Sigmoid colon (tissue), 7 donors: ENCODE measurements at regions of chr22 and their contacts with region 1.

Region 1: DNA sequence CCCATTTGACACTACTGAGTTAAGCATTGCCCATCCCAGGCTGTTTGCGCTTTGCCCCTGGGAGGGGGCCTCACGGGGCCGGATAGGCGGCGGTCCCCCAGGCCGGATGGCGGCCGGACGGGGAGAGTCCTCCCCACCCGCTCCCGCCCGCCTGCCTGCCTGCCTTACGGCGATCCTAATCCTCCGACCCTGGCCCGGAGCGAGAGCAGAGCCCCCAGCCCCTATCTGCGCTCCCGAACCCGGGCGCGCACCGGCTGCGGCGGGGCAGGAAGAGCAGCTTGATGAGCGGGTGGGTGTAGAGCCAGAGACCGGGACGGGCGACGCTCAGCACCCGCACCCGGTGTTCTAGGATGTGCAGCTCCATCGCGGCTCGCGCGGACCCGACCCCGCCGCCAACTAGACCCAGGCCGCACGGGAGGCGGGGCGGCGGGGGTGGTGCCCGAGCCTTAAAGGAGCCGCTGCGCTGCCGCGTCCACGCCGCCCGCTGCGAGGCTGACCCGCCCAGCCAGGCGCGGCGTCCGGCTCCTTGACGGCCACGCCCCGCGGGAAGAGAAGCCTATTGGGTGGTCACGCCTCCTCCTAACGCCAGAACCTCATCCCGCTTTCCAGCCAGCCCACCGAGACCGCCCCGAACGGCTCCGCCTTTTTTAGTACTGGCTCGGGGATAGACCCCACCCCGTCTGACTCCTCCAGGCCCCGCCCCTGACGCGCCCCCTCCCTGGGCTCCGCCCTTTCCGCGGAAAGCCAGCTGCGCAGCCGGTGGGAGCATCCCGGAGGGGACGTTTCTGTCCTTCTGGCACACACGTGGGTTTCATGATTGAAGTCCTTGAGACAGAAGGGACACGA is at the start of gene CASTOR1:
- DNase-seq: peak; percentile 100
- H3K4me3 ChIP-seq: peak within 1 kb of the TSS; percentile 90 to 95 (median 93)
- H3K27ac ChIP-seq: peak within 1 kb of the TSS; percentile 95 to 98 (median 96)
- H3K4me1 ChIP-seq: peaks cover 0 to 42% (median 35%) of the 10 kb centered on the region in 4 donors
- H3K27me3 ChIP-seq: no peaks in the 10 kb centered on the region
- CTCF ChIP-seq: no peak
- EP300 ChIP-seq: no peak
- POLR2A ChIP-seq: peak; percentile 81 to 85
- total RNA-seq, gene CASTOR1: 5.3 to 15.0 (median 10.8) TPM

Region 2: GRCh38 chr22:30143265-30143664 is 146.1 kb before region 1 on chr22:
- intact Hi-C with region 1: no loop called
- DNase-seq: no peak
- H3K4me3 ChIP-seq: no peak overlapping the region
- H3K27ac ChIP-seq: no peak overlapping the region
- H3K4me1 ChIP-seq: no peaks in the 10 kb centered on the region
- H3K27me3 ChIP-seq: no peaks in the 10 kb centered on the region
- CTCF ChIP-seq: no peak
- EP300 ChIP-seq: no peak
- POLR2A ChIP-seq: no peak

Region 3: DNA sequence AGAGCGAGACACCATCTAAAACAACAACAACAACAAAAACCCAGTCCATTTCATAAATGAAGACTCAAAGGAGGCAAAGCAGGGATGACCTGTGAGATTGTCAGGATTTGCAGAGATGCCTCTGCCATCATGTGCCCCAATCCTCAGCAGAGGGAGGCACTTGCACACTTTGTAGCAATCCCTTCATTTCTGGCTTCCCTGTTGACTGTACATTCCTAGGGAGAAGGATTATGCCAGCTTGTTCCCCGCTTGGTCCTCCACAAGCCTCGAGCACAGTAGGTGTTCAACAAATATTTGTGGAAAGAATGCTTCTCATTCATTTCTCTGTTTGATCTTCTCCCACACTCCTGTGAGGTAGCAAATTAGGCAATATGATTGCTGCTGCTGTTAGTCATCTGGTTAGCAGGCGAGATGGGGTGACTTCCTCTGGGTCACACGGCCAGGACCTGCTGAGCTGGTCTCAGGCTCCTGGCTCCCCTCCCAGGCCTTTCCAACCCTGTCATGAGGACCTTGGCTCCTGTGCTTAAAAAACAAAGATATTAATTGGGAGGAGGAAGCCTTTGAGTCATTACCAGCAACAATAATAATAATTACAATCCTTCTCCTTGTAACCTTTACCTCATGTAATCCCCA is 76.9 kb before region 1 on chr22:
- intact Hi-C with region 1: no loop called
- DNase-seq: peak; percentile 82
- H3K4me3 ChIP-seq: no peak overlapping the region
- H3K27ac ChIP-seq: no peak overlapping the region
- H3K4me1 ChIP-seq: peaks cover 0 to 27% (median 11%) of the 10 kb centered on the region in 4 donors
- H3K27me3 ChIP-seq: no peaks in the 10 kb centered on the region
- CTCF ChIP-seq: no peak
- EP300 ChIP-seq: no peak
- POLR2A ChIP-seq: no peak

Region 4: DNA sequence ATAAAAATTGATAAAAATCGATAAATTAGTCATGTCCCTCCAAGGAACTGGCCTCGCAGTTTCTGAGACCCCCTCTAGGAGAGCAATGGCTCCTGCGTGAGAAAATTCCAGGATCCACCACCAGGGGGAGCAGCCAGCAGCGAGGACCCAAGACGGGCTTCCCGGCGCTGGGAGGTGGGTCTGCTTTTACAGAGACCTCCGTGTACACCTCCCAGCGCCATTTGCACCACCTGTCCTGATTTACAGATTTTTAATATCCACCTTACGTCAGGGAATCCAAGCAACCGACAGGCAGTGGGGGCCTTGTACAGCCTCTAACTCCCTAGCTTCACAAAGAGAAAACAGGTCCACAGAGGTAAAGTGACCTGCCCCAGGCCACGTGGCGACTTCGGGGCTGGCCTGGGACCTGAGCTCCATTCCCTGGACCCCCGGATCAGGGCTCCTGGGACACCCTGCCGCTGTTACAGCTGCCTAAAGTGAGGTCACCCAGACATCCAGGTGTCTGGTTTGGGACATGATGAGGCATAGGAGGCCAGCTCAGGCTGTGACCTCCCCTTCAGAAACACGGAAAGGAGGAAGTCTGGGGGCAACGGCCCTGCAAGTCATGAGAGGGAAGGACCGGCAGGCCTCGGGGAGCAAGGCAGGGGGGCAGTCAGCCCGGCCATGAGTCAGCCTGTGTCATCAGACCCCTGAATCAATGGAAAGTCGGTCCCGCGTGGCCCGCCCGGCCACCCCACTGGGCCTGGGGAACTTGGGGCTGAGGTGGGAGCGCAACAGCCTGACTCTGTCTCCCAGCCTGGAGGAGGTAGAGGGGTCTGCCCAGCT is 26.2 kb before region 1 on chr22:
- intact Hi-C with region 1: loop called (anchors 2 kb)
- DNase-seq: peak; percentile 87
- H3K4me3 ChIP-seq: peak overlapping the region in 2 of 4 donors; percentile 19 to 32
- H3K27ac ChIP-seq: no peak overlapping the region
- H3K4me1 ChIP-seq: peaks cover 0 to 7% (median 2%) of the 10 kb centered on the region in 4 donors
- H3K27me3 ChIP-seq: no peaks in the 10 kb centered on the region
- CTCF ChIP-seq: peak; percentile 89 to 99 (median 98)
- EP300 ChIP-seq: no peak
- POLR2A ChIP-seq: no peak

Region 5: GRCh38 chr22:30309951-30310741 is 20.8 kb after region 1 on chr22:
- intact Hi-C with region 1: loop called (anchors 2 kb)
- DNase-seq: peak; percentile 88
- H3K4me3 ChIP-seq: no peak overlapping the region
- H3K27ac ChIP-seq: peak overlapping the region; percentile 82 to 89 (median 88)
- H3K4me1 ChIP-seq: peaks cover under 1 to 97% (median 91%) of the 10 kb centered on the region in 4 donors
- H3K27me3 ChIP-seq: no peaks in the 10 kb centered on the region
- CTCF ChIP-seq: no peak
- EP300 ChIP-seq: peak in 1 of 4 donors; percentile 59
- POLR2A ChIP-seq: no peak

Region 6: GRCh38 chr22:30326706-30327362 is 37.5 kb after region 1 on chr22 and contains the start of gene TBC1D10A:
- intact Hi-C with region 1: loop called (anchors 1 kb)
- DNase-seq: peak; percentile 94
- H3K4me3 ChIP-seq: peak within 1 kb of the TSS; percentile 83 to 100 (median 96)
- H3K27ac ChIP-seq: peak within 1 kb of the TSS; percentile 91 to 98 (median 92)
- H3K4me1 ChIP-seq: peaks cover 0 to 48% (median 44%) of the 10 kb centered on the region in 4 donors
- H3K27me3 ChIP-seq: no peaks in the 10 kb centered on the region
- CTCF ChIP-seq: no peak
- EP300 ChIP-seq: no peak
- POLR2A ChIP-seq: peak; percentile 68 to 75
- total RNA-seq, gene TBC1D10A: 12.5 to 31.0 (median 26.8) TPM

Region 7: DNA sequence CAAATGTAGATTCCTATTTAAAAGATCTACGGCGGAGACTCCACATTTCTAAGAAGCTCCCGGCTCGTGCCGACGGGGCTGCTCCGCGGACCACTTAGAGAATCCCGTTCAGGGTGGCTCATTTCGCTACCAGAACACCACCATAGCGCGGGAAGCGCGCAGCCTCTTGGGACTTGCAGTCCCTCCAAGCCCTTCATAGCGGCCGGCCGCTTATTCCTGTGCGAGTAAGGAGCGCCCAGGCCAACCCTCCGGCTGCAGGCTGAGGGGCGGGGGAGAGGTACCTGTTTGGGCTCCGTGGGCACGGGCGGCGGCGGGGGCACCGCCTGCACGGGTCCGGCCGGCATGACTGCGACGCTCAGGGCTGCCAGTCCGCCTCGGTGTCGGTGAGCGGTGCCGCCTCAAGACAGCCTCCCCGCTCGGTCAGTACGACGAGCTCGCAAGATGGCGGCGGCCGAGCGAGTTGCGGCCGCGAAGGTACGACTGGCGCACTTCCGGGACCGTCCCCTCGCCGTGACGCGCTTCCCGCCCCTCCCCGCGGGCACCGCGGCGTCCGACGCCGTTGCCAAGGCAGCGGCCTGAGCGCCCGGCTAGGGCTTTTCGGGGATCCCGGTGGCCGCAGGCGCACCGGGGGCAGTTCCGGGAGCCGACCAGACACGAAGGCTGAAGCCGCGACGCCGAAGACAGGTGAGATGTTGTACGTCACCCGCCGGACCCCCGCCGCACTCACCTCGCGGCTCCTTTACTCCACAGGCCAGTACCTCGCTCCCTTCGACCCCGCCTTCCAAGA is 67.3 kb after region 1 on chr22 and contains the starts of genes CCDC157 and SF3A1:
- intact Hi-C with region 1: loop called (anchors 1 kb)
- DNase-seq: peak; percentile 94
- H3K4me3 ChIP-seq: peak within 1 kb of the TSS; percentile 69 to 91 (median 77)
- H3K27ac ChIP-seq: peak within 1 kb of the TSS; percentile 94 to 97 (median 96)
- H3K4me1 ChIP-seq: peaks cover 0 to 41% (median 37%) of the 10 kb centered on the region in 4 donors
- H3K27me3 ChIP-seq: no peaks in the 10 kb centered on the region
- CTCF ChIP-seq: no peak
- EP300 ChIP-seq: peak in 1 of 4 donors; percentile 34
- POLR2A ChIP-seq: peak; percentile 76 to 90
- total RNA-seq, gene CCDC157: 0.83 to 2.0 (median 1.7) TPM
- total RNA-seq, gene SF3A1: 24.2 to 61.5 (median 33.5) TPM